Naive thymus-derived CD8-positive, alpha-beta T cell (primary cell): ENCODE measurements at regions of chr19 and their contacts with region 1.

Region 1: GRCh38 chr19:29610563-29611271 is 4.6 kb downstream of the POP4 start:
- DNase-seq: peak; percentile 66 to 90 (median 82)
- ATAC-seq: peak; percentile 53 to 61
- H3K4me3 Mint-ChIP-seq: peak overlapping the region in 2 of 10 donors; percentile 43 to 67
- H3K27ac Mint-ChIP-seq: peak overlapping the region in 8 of 10 donors; percentile 38 to 92 (median 82)
- H3K4me1 Mint-ChIP-seq: peaks cover 16 to 39% (median 38%) of the 10 kb centered on the region in 4 donors
- H3K27me3 Mint-ChIP-seq: peaks cover 0 to 4% (median 0%) of the 10 kb centered on the region in 5 donors

Region 2: DNA sequence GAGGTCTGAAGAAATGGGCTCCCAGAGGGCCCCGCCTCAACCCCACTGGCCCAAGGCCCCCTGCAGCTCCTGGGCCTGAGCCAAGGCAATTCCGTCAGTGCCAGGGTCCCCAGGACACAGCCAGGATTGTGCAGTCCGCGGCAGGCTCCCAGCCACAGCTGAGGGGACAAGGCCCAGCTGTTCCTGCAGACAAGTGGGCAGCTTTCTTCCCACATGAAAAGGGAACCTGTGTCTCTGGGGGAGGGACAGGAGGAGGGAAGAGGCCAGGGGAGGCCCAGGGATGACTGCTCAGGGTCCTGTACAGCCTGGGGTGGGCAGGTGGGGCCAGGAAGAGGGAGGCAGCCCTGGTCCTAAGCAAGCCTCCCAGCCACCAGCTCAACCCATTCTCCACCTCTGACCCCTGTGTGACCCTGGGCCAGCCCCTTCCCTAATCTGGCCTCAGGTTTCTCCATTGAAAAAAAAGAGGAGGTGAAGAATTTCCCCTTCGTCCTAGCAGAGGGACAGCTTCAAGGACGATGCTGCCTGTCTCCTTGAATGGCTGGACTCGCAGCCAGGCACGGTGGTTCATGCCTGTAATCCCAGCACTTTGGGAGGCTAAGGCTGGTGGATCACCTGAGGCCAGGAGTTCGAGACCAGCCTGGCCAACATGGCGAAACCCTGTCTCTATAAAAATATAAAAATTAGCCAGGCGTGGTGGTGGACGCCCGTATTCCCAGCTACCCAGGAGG is 105.5 kb before region 1 on chr19:
- POLR2A ChIA-PET with region 1: no interaction called
- DNase-seq: peak in 1 of 10 donors; percentile 34
- ATAC-seq: no peak
- H3K4me3 Mint-ChIP-seq: no peak overlapping the region
- H3K27ac Mint-ChIP-seq: no peak overlapping the region
- H3K4me1 Mint-ChIP-seq: no peaks in the 10 kb centered on the region
- H3K27me3 Mint-ChIP-seq: peaks cover 11 to 58% (median 38%) of the 10 kb centered on the region in 5 donors

Region 3: DNA sequence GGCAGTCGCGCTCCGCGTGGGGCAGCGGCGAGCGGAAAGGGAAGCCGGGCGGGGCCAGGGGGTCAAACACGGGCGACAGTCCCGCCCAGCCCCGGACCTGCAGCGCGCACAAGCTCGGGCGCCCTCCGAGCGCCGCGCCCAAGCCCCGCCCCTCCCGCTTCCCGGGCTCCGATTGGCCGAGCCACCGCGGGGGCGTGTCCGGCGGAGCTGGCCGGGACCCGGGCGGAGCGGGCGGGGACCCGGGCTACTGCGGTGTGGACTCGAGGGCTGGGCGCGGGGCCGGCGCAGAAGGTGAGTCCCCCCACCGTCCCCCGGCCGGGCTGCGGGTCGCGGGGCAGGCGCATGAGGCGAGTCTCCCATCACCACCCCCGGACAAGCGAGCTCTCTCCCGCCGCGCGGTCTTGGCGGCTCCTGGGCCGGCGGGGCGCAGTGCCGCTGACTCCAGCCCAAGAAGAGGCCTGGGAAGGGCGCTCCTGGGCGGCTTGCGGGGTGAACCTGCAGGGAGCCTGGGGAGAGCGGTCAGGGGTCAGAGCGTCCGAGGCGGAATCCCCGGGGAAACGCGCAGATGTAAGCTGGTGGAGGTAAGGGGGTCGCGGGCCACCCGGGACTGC is 54.6 kb after region 1 on chr19 and contains the start of gene PLEKHF1:
- POLR2A ChIA-PET with region 1: interaction called, 140 read pairs
- DNase-seq: peak; percentile 57 to 88 (median 80)
- ATAC-seq: peak; percentile 67 to 74
- H3K4me3 Mint-ChIP-seq: peak within 1 kb of the TSS; percentile 87 to 94 (median 92)
- H3K27ac Mint-ChIP-seq: peak within 1 kb of the TSS; percentile 89 to 99 (median 96)
- H3K4me1 Mint-ChIP-seq: peaks cover 27 to 74% (median 66%) of the 10 kb centered on the region in 4 donors
- H3K27me3 Mint-ChIP-seq: no peaks in the 10 kb centered on the region
- polyA plus RNA-seq, gene PLEKHF1: 3.8 to 19.7 (median 15.5) TPM

Region 4: DNA sequence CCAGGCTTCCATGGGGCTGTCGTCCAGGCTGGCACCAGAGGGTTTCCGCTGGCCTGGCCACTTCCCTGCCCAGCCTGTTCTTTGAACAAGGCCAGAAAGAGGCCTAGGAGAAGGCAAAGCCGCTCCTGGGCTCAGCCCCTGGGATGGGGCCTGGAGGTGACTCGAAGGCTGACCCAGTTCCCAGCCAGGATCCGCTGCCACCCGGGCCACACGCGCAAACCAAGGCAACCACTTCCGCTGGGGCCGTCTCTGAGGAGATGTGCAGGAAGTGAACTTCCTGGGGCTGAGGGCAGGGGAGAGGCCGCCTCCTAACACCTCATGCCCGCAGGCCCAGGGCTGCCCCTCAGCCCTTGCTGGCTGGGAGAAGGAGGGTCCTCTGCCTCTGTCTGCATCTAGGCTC is 69.7 kb after region 1 on chr19:
- POLR2A ChIA-PET with region 1: interaction called, 22 read pairs
- DNase-seq: peak; percentile 55 to 86 (median 74)
- ATAC-seq: peak; percentile 89 to 96
- H3K4me3 Mint-ChIP-seq: peak overlapping the region; percentile 50 to 87 (median 74)
- H3K27ac Mint-ChIP-seq: peak overlapping the region in 9 of 10 donors; percentile 81 to 93 (median 89)
- H3K4me1 Mint-ChIP-seq: peaks cover 34 to 87% (median 74%) of the 10 kb centered on the region in 4 donors
- H3K27me3 Mint-ChIP-seq: no peaks in the 10 kb centered on the region

Region 5: DNA sequence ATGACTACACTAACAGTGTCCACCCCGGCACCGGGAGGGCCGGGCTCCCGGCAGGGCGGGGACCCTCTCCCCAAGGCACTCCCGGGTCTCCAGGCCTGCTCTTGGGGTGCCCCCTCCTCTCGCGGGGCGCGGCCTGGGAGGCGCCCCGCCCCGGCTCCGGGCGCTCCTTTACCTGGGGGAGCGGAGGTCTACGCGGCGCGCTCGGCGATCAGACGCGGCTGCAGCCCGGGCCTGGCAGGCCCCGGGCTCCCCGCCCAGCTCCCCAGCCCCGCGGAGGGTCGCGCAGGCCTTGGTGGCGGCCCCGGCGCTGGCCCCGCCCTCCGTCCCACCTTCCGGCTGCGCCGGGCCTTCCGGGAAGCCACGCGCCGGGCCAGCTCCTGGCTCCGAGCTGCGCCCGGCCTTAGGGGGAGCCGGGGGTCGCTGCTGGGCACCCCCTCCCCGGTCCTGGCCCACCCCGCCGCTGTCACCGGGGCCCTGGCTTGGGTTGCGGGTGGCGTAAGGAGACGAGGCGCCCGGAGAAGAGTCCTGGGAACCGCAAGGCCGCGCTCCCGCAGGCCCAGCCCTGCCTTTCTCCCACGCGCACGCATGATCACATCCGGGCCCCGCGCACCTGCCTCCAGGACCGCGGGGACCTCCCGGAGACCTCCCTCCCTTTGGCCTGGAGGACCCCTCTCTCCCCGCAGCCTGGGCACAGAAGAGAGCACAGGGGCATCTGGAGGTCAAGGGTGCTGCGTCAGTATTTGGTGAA is 104.4 kb after region 1 on chr19 and contains the start of gene C19orf12:
- POLR2A ChIA-PET with region 1: interaction called, 153 read pairs
- DNase-seq: peak; percentile 37 to 84 (median 65)
- ATAC-seq: peak; percentile 60 to 65
- H3K4me3 Mint-ChIP-seq: peak within 1 kb of the TSS; percentile 87 to 98 (median 90)
- H3K27ac Mint-ChIP-seq: peak within 1 kb of the TSS; percentile 93 to 99 (median 96)
- H3K4me1 Mint-ChIP-seq: peaks cover 34 to 62% (median 56%) of the 10 kb centered on the region in 4 donors
- H3K27me3 Mint-ChIP-seq: no peaks in the 10 kb centered on the region
- polyA plus RNA-seq, gene C19orf12: 16.7 to 32.3 (median 19.8) TPM

Region 6: GRCh38 chr19:29844891-29845572 is 234.3 kb after region 1 on chr19:
- POLR2A ChIA-PET with region 1: interaction called, 11 read pairs
- DNase-seq: peak in 9 of 10 donors; percentile 95 to 99 (median 97)
- ATAC-seq: peak; percentile 81 to 83
- H3K4me3 Mint-ChIP-seq: peak overlapping the region; percentile 89 to 98 (median 95)
- H3K27ac Mint-ChIP-seq: peak overlapping the region; percentile 91 to 98 (median 96)
- H3K4me1 Mint-ChIP-seq: peaks cover 11 to 14% (median 12%) of the 10 kb centered on the region in 4 donors
- H3K27me3 Mint-ChIP-seq: peaks cover 0 to 8% (median 0%) of the 10 kb centered on the region in 5 donors